K562 (cell line): ENCODE measurements at regions of chrX and their contacts with region 1.

Region 1: GRCh38 chrX:121052111-121052510 is 4.7 kb downstream of the GLUD2 start:
- DNase-seq: no peak
- ATAC-seq: no peak
- H3K4me3 ChIP-seq: no peak overlapping the region
- H3K27ac ChIP-seq: no peak overlapping the region
- H3K4me1 ChIP-seq: peaks cover 3 to 9% of the 10 kb centered on the region in 2 experiments; a peak in 4 of 5 replicates
- H3K27me3 ChIP-seq: no peaks in the 10 kb centered on the region
- CTCF ChIP-seq: no peak
- EP300 ChIP-seq: no peak
- POLR2A ChIP-seq: no peak
- RAD21 ChIP-seq: no peak

Region 2: DNA sequence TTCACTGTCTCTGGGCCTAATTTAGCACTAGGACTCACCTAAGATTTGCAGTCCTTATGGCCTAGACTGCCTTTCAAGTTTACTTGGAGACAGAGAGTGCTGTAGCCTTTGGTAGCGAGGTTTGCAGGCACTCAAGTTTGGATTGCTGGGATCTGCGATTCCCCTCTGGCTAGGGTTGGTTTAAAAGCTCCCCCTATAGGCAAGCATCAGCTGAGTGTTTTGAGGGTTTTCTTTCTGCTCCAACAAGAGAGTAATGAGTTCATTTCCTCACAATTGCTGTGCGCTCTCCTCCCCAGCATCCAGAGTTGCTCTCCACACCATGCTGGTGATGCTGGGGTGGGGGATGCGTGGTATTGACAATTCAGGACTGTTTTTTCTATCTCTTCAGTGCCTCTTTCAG is 202.2 kb after region 1 on chrX:
- CTCF ChIA-PET with region 1: no interaction called
- POLR2A ChIA-PET with region 1: no interaction called
- in situ Hi-C with region 1: no loop called
- intact Hi-C with region 1: loop called (anchors 2 kb)
- DNase-seq: peak in 1 of 4 experiments; percentile 40
- ATAC-seq: peak; percentile 85
- H3K4me3 ChIP-seq: no peak overlapping the region
- H3K27ac ChIP-seq: no peak overlapping the region
- H3K4me1 ChIP-seq: peaks cover 0 to 5% of the 10 kb centered on the region in 2 experiments; a peak in 2 of 5 replicates
- H3K27me3 ChIP-seq: no peaks in the 10 kb centered on the region
- CTCF ChIP-seq: peak; percentile 27 to 49 (median 42); a peak in 5 of 6 replicates
- EP300 ChIP-seq: no peak
- POLR2A ChIP-seq: no peak
- RAD21 ChIP-seq: peak in 1 of 2 experiments; percentile 59; a peak in 2 of 4 replicates